ENCODE measurements at regions of chr11 and their contacts with region 1.

Region 1: GRCh38 chr11:3109921-3110706 is 52.9 kb upstream of the CARS1 start:
- DNase-seq: peak in 7 of 14 experiments; percentile 10 to 59 (median 46)
- ATAC-seq: peak; percentile 81
- H3K4me3 ChIP-seq: no peak overlapping the region
- H3K4me3 Mint-ChIP-seq: no peak overlapping the region
- H3K27ac ChIP-seq: no peak overlapping the region
- H3K27ac Mint-ChIP-seq: no peak overlapping the region
- H3K4me1 ChIP-seq: no peaks in the 10 kb centered on the region
- H3K4me1 Mint-ChIP-seq: no peaks in the 10 kb centered on the region
- H3K27me3 ChIP-seq: no peaks in the 10 kb centered on the region
- H3K27me3 Mint-ChIP-seq: no peaks in the 10 kb centered on the region
- CTCF ChIP-seq: peak; percentile 51

Region 2: DNA sequence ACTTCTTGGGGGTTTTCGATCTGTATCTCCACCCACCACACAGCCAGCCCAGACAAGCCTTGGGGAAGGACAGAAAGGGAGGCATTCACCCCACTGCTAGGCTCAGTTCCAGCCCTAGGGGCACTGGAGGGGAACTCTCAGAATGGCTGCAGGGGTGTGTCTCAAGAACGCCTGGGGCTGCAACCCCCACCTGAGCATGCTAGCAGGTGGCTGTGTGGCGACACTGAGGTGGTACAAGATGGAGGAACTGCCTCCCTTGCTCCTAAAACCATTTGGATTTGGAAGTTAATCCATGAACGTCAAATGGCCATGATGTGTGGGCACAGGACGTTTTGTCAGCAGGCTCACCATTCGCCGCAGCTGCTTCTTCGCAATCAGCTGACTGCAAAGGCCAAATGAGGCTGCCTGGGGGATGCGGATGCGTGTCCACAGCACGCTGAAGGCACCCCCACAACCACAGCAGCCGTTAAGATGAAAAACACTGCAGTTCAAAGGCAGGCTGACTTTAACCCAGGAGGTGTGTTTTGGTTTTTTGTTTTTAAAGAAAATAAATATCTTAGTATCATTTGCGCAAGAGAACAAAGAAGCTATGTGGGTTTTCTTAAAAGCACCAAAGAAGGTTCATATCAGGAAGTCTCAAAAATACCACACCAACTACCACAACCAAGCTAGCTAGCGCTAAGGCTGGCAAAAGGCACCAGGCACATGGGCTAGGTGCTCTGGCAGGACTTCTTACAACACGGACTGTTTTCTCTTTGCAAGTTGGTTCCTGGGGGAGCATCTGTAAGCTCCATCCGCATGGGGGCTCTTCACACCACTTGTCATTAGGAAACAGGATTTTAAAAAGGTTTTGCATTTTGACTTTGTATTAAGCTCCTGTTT is 95.8 kb before region 1 on chr11:
- CTCF ChIA-PET with region 1: no interaction called
- POLR2A ChIA-PET with region 1: no interaction called
- intact Hi-C with region 1: no loop called
- DNase-seq: peak; percentile 64 to 92 (median 78)
- ATAC-seq: peak; percentile 86
- H3K4me3 ChIP-seq: peak overlapping the region; percentile 25
- H3K4me3 Mint-ChIP-seq: peak overlapping the region; percentile 66
- H3K27ac ChIP-seq: peak overlapping the region; percentile 21 to 48
- H3K27ac Mint-ChIP-seq: peak overlapping the region; percentile 93
- H3K4me1 ChIP-seq: peaks cover 87% of the 10 kb centered on the region
- H3K4me1 Mint-ChIP-seq: peaks cover 33% of the 10 kb centered on the region
- H3K27me3 ChIP-seq: no peaks in the 10 kb centered on the region
- H3K27me3 Mint-ChIP-seq: no peaks in the 10 kb centered on the region
- CTCF ChIP-seq: no peak

Region 3: DNA sequence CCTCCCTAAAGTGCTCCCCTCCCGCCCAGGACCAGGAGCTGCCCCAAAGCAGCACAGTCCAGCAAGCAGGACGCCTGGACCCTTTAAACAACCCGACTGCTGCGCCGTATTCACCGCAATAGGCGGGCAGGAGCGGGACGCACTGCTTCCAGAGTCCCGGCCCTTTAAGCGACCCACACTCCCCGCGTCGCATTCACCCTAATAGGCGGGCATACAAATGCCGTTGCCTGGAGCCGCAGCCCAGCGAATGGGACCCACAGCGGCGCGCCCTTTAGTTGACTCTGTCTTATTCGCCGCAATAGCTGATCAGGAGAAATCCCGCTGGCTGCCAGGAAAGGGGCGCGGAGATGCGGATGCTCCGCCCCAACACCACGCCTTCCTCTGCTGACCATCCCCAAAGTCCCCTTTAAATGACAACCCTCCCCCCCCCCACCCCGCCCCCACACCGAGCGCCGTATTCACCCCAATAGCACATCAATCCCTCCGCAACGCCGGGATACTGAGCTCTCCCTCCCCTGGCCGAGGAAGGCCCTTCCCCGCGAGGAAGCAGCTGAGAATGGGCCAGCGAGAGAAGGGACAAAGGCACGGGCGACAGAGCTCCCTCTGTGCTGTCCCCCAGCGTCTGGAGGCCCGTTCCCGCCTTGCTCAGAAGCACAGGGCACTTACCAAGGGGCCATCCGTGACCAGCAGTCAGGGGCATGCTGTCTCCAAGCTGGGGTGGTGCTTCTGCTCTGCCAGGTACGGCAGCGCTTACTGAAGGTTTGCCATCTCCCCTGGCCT is 50.3 kb after region 1 on chr11:
- CTCF ChIA-PET with region 1: no interaction called
- POLR2A ChIA-PET with region 1: no interaction called
- intact Hi-C with region 1: loop called in 1 of 2 experiments (anchors 10 kb)
- DNase-seq: peak in 1 of 14 experiments; percentile 18
- ATAC-seq: no peak
- H3K4me3 ChIP-seq: no peak overlapping the region
- H3K4me3 Mint-ChIP-seq: peak overlapping the region; percentile 54
- H3K27ac ChIP-seq: no peak overlapping the region
- H3K27ac Mint-ChIP-seq: no peak overlapping the region
- H3K4me1 ChIP-seq: peaks cover 19% of the 10 kb centered on the region
- H3K4me1 Mint-ChIP-seq: peaks cover 33% of the 10 kb centered on the region
- H3K27me3 ChIP-seq: peaks cover 1 to 7% of the 10 kb centered on the region in 2 experiments
- H3K27me3 Mint-ChIP-seq: peaks cover 12% of the 10 kb centered on the region
- CTCF ChIP-seq: no peak